Calu3 (cell line): ENCODE measurements at regions of chr5 and their contacts with region 1.

Region 1: DNA sequence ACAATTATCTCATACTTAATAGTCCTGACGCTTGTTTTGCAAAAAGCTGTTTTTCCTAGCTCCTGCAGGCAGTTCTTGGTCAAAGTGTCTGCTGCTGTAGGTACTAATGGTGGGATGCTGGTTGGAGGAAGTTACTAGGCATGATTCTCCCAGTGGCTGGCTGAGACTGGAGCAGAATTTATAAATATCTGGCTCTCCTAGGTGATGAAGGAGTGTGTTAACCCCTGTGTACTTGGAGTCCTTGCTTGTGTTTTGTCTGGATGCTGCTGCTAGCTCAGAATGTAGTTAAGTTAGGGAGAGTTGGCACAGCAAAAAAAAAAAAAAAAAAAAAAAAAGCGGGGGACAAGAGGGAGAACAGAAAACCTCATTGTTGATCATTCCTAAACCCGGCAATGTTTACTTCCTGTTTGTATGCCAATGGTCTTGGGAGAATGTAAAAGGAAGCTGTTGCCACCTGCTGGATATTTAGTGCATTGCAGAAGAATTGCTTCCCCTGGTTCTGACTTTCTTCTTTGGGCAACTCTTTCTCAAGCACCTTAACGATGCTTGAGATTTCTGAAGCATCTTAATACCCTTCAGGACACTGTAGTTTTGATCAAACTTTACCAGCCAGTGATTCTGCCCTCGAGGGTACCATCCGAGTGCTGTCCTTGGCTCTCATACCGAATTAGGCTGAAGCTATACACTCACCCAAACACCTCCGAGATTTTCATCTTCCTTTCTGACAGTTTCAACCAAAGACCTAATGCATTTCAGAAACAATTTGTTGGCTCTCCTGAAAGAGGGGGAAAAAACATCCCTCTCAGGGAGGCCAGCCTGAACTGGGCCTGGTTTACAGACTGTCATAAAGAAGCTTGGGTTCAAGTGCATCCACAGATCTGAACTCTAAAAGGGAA is 71.7 kb upstream of the WWC1 start:
- DNase-seq: peak; percentile 72
- H3K4me3 Mint-ChIP-seq: no peak overlapping the region
- H3K27ac Mint-ChIP-seq: no peak overlapping the region
- H3K4me1 Mint-ChIP-seq: peaks cover 17% of the 10 kb centered on the region
- H3K27me3 Mint-ChIP-seq: peaks cover 93% of the 10 kb centered on the region
- CTCF ChIP-seq: peak; percentile 83

Region 2: GRCh38 chr5:167582283-167582682 is 637.5 kb before region 1 on chr5:
- CTCF ChIA-PET with region 1: no interaction called
- intact Hi-C with region 1: loop called (anchors 1 kb)
- DNase-seq: no peak
- H3K4me3 Mint-ChIP-seq: no peak overlapping the region
- H3K27ac Mint-ChIP-seq: no peak overlapping the region
- H3K4me1 Mint-ChIP-seq: no peaks in the 10 kb centered on the region
- H3K27me3 Mint-ChIP-seq: peaks cover 33% of the 10 kb centered on the region
- CTCF ChIP-seq: no peak

Region 3: DNA sequence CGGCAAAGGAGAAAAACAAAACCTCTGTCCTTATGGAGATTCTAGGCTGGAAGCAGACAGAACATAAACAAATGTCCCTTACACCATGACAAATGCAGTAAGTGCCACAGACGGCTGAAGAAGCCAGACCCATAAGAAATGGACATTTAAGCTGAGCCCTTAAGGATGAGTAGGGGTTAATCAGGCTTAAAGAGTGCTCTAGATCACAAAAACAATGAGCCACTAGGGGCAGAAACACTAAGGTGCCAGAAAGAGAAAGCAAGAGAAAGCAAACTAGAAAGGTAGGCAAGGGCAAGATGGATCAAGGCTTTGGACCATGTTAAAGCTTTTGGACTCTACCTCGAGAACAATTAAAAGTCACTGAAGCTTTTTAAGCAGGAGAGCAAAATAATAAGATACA is 255.2 kb before region 1 on chr5:
- CTCF ChIA-PET with region 1: no interaction called
- intact Hi-C with region 1: loop called (anchors 5 kb)
- DNase-seq: no peak
- H3K4me3 Mint-ChIP-seq: no peak overlapping the region
- H3K27ac Mint-ChIP-seq: no peak overlapping the region
- H3K4me1 Mint-ChIP-seq: no peaks in the 10 kb centered on the region
- H3K27me3 Mint-ChIP-seq: peaks cover 87% of the 10 kb centered on the region
- CTCF ChIP-seq: no peak

Region 4: GRCh38 chr5:168086104-168086610 is 133.6 kb before region 1 on chr5:
- CTCF ChIA-PET with region 1: no interaction called
- intact Hi-C with region 1: loop called (anchors 1 kb)
- DNase-seq: peak; percentile 63
- H3K4me3 Mint-ChIP-seq: no peak overlapping the region
- H3K27ac Mint-ChIP-seq: no peak overlapping the region
- H3K4me1 Mint-ChIP-seq: peaks cover 21% of the 10 kb centered on the region
- H3K27me3 Mint-ChIP-seq: peaks cover 82% of the 10 kb centered on the region
- CTCF ChIP-seq: peak; percentile 18

Region 5: DNA sequence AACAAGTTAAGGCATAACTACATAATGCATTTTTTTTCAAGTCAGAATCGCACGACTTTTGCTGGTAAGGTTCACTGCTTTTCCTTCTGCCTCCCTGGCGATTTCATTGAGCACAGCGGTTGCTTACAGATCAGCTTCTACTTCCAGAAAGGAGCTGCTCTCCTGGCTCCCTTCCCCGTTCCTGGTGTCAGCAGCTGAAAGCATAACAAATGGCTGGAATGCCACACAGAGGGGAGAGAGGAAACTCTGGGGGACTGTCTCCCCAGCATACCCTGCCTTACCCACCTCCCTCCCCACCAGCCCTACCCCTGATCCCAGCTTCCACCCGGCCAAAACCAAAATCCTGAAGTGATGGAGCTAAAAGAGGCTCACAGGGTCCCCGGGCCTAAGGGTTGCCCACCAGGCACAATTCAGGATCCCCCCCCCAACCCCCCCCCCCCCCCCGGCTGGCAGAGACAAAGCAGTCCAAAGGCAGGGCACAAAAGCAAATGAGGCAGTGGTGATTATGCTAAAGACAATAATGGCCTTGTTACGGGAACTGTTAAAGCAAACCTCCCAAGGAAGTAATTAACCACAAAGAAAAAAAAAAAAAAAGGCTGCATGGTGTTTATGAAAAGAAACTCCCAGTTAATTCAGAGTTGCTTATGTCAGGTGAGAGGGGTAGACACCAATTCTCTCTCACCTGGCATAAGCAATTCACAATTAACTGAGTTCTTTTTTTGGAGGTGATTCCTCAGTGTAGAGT is 54.4 kb before region 1 on chr5:
- CTCF ChIA-PET with region 1: no interaction called
- intact Hi-C with region 1: loop called (anchors 5 kb)
- DNase-seq: peak; percentile 33
- H3K4me3 Mint-ChIP-seq: no peak overlapping the region
- H3K27ac Mint-ChIP-seq: no peak overlapping the region
- H3K4me1 Mint-ChIP-seq: peaks cover 38% of the 10 kb centered on the region
- H3K27me3 Mint-ChIP-seq: peaks cover 11% of the 10 kb centered on the region
- CTCF ChIP-seq: no peak

Region 6: DNA sequence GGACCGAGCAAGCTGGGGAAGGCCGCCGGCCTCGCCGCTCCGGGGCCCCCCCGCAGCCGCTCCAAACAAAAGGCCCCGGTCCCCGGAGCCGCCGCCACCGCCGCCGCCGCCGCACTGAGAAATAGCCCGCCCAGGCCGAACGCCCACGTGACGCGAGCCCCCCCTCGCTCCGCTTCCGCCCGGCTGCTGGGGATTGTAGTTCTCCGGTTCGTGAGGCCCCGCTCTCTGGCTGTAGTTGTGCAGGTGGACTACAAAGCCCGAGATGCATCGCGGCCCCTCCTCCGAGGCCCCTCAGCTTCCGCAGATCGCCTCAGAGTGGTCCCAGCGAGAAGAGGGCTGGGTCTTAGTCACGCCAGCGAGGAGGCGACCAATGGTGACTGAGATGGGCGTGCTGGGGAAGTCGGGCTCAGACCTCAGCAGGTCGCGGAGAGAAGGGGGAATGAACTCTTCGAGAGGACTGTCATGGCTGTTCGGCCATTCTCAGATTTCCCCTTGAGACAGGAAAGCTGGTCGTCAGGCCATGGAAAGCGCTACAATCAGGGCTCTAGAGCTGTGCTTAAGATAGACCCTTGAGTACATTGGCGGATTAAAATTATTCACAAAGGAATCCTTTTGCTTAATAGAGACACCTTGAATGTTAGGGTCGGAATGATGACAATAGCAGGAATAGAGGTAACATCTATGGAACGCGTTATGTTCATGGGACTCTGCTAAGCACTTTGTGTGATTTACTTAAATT is 359.9 kb after region 1 on chr5:
- CTCF ChIA-PET with region 1: no interaction called
- intact Hi-C with region 1: no loop called
- DNase-seq: peak; percentile 99
- H3K4me3 Mint-ChIP-seq: peak overlapping the region; percentile 78
- H3K27ac Mint-ChIP-seq: peak overlapping the region; percentile 94
- H3K4me1 Mint-ChIP-seq: peaks cover 36% of the 10 kb centered on the region
- H3K27me3 Mint-ChIP-seq: peaks cover under 1% of the 10 kb centered on the region
- CTCF ChIP-seq: no peak